Transverse colon (tissue), 4 donors: ENCODE measurements at regions of chr9 and their contacts with region 1.

Region 1: DNA sequence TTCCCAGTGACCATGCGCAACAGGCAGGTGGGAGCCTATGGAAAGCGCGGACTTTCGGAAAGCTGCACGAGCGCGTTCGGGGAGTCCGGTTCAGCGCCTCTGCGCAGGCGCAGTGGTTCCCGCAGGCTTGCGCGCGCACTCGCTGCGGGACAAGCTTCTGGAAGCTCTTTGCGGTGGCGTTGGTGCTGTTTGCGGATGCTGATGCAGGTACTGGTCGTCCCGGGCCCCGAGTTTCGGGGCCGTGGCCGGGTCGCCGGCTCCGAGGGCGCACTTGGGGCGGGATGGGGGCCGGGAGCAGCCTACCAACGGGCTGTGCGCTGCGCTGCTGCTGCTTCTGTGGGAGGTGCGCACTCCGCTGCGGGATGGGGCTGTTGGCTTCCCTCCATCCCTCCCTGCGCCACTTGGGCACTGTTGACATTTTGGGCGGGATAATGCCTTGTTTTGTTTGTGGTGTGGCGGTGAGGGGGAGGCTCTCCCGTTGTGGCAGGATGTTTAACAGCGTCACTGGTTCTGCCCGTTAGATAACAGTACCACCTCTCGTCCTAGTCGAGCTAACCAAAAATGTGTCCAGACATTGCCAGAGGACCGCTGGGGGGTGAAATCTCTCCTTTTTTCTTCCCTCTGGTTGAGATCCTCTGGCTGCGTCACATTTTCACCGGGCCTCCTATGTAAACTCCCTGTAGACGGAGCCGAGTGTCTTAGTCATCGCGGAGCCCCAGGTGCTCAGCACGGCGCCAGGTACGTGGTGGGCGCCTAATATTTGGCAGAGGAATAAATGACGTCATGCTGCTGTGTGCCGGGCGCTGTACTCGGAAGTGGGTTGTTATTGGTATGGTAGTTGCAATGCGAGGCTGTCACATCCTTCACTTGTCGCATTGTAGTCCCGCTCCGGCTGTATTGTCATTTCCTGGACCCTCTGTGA is at the start of gene ZNF483:
- DNase-seq: peak; percentile 71
- H3K4me3 ChIP-seq: peak within 1 kb of the TSS; percentile 49 to 72 (median 59)
- H3K27ac ChIP-seq: peak within 1 kb of the TSS; percentile 36 to 56 (median 50)
- H3K4me1 ChIP-seq: peaks cover 0 to 16% (median 5%) of the 10 kb centered on the region in 4 donors
- H3K27me3 ChIP-seq: peaks cover 22% of the 10 kb centered on the region
- CTCF ChIP-seq: no peak
- EP300 ChIP-seq: no peak
- POLR2A ChIP-seq: peak; percentile 16
- total RNA-seq, gene ZNF483: 2.2 to 4.9 (median 3.4) TPM

Region 2: GRCh38 chr9:111483862-111484571 is 41.3 kb before region 1 on chr9 and contains the start of gene ECPAS:
- in situ Hi-C with region 1: no loop called
- intact Hi-C with region 1: loop called (anchors 1 kb)
- DNase-seq: peak; percentile 85
- H3K4me3 ChIP-seq: peak within 1 kb of the TSS; percentile 59 to 76 (median 66)
- H3K27ac ChIP-seq: peak within 1 kb of the TSS; percentile 92 to 100 (median 97)
- H3K4me1 ChIP-seq: peaks cover 3 to 26% (median 16%) of the 10 kb centered on the region in 4 donors
- H3K27me3 ChIP-seq: no peaks in the 10 kb centered on the region
- CTCF ChIP-seq: no peak
- EP300 ChIP-seq: no peak
- POLR2A ChIP-seq: peak; percentile 63
- total RNA-seq, gene ECPAS: 69.2 to 88.8 (median 77.0) TPM

Region 3: GRCh38 chr9:111548623-111549022 is 23.3 kb after region 1 on chr9:
- in situ Hi-C with region 1: no loop called
- intact Hi-C with region 1: loop called (anchors 2 kb)
- DNase-seq: no peak
- H3K4me3 ChIP-seq: no peak overlapping the region
- H3K27ac ChIP-seq: no peak overlapping the region
- H3K4me1 ChIP-seq: no peaks in the 10 kb centered on the region
- H3K27me3 ChIP-seq: no peaks in the 10 kb centered on the region
- CTCF ChIP-seq: no peak
- EP300 ChIP-seq: no peak
- POLR2A ChIP-seq: no peak